Natural killer cell (primary cell): ENCODE measurements at regions of chr14 and their contacts with region 1.

Region 1: DNA sequence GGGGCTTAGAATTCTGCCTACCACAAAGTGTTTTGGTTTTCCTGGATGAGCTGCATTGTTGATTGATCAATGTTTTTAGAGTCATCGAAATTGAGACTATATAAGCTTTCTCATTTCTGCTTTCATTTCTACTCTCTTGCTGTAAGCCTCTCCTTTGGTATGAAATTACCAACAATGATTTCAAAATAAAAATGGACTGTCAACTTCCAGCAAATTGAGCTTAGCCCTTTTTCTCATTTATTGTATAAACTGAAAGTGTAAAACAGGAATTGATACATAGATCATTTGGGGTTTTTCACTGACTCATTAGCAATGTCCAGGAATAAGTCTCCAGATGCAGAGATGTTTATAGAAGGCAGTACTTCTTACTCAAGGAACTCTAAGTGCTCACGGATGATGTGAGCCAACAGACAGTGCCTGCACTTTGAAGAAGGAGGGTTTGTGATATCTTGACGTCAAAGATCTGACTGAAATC is 20.0 kb upstream of the PCNX1 start:
- DNase-seq: peak in 1 of 2 donors; percentile 39
- ATAC-seq: no peak
- H3K4me3 ChIP-seq: no peak overlapping the region
- H3K4me3 Mint-ChIP-seq: peak overlapping the region; percentile 75
- H3K27ac ChIP-seq: peak overlapping the region; percentile 45
- H3K27ac Mint-ChIP-seq: peak overlapping the region; percentile 85 to 87
- H3K4me1 ChIP-seq: peaks cover 56% of the 10 kb centered on the region
- H3K4me1 Mint-ChIP-seq: peaks cover 54 to 72% of the 10 kb centered on the region in 2 donors
- H3K27me3 ChIP-seq: no peaks in the 10 kb centered on the region
- H3K27me3 Mint-ChIP-seq: peaks cover 0 to 11% of the 10 kb centered on the region in 2 donors
- CTCF ChIP-seq: no peak

Region 2: DNA sequence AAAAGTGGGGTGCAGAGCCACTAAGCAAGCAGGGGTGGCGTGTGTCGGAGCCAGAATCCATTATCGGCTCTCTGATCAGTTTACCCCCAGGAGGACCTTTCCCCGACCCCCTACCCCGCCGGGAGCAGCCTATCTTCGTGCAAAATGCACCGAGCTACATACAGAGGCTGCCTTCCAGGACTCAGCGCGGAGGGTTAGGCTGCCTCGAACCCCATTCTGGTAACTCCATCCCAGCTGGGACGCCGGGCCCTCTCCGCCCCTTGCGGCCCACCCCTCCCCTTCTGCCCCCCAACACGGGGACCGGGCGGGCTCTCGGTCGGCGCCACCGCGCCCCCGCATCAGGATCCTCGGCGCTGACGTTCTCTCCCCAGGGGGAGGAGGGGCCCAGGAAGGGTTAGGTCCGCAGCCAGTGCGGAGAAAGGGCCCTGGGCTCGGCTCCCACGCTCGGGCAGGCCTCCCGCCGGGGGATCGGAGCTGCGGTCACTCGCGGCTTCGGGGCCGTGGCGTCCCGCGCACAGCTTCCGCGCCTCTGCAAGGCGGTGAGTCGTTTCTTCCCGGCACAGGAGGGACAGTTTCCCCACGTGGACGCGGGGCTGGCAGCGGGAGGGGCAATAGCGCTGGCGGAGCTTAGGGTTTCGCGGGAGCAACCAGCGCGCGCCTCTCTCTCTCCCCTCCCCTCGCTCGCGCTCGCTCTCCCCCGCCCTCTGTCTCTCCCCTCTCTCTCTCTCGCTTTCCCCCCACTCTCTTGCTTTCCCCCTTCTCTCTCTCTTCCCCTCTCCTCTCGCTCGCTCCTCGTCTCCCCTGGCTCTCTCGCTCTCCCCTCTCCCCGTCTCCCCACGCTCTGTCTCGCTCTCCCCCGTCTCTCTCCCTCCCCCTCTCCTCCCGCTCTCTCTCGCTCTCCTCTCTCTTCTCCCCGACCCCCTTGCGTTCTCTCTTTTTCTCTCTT is 65.4 kb before region 1 on chr14:
- intact Hi-C with region 1: loop called (anchors 5 kb)
- DNase-seq: peak; percentile 47 to 71
- ATAC-seq: peak; percentile 42 to 47 (median 46)
- H3K4me3 ChIP-seq: peak overlapping the region; percentile 52
- H3K4me3 Mint-ChIP-seq: peak overlapping the region; percentile 91
- H3K27ac ChIP-seq: no peak overlapping the region
- H3K27ac Mint-ChIP-seq: peak overlapping the region in 1 of 2 donors; percentile 79
- H3K4me1 ChIP-seq: peaks cover 25% of the 10 kb centered on the region
- H3K4me1 Mint-ChIP-seq: peaks cover 14 to 20% of the 10 kb centered on the region in 2 donors
- H3K27me3 ChIP-seq: peaks cover 19% of the 10 kb centered on the region
- H3K27me3 Mint-ChIP-seq: peaks cover 17 to 29% of the 10 kb centered on the region in 2 donors
- CTCF ChIP-seq: no peak

Region 3: GRCh38 chr14:70907176-70907995 is 20.1 kb after region 1 on chr14 and contains the start of gene PCNX1:
- intact Hi-C with region 1: no loop called
- DNase-seq: peak; percentile 89 to 93
- ATAC-seq: peak; percentile 81 to 92 (median 84)
- H3K4me3 ChIP-seq: peak within 1 kb of the TSS; percentile 97
- H3K4me3 Mint-ChIP-seq: peak within 1 kb of the TSS; percentile 93
- H3K27ac ChIP-seq: peak within 1 kb of the TSS; percentile 93
- H3K27ac Mint-ChIP-seq: peak within 1 kb of the TSS; percentile 92 to 100
- H3K4me1 ChIP-seq: peaks cover 15% of the 10 kb centered on the region
- H3K4me1 Mint-ChIP-seq: peaks cover 45 to 47% of the 10 kb centered on the region in 2 donors
- H3K27me3 ChIP-seq: no peaks in the 10 kb centered on the region
- H3K27me3 Mint-ChIP-seq: no peaks in the 10 kb centered on the region
- CTCF ChIP-seq: peak; percentile 85
- total RNA-seq, gene PCNX1: 79.8 to 124 (median 119) TPM